ENCODE measurements at regions of chr20 and their contacts with region 1.

Region 1: DNA sequence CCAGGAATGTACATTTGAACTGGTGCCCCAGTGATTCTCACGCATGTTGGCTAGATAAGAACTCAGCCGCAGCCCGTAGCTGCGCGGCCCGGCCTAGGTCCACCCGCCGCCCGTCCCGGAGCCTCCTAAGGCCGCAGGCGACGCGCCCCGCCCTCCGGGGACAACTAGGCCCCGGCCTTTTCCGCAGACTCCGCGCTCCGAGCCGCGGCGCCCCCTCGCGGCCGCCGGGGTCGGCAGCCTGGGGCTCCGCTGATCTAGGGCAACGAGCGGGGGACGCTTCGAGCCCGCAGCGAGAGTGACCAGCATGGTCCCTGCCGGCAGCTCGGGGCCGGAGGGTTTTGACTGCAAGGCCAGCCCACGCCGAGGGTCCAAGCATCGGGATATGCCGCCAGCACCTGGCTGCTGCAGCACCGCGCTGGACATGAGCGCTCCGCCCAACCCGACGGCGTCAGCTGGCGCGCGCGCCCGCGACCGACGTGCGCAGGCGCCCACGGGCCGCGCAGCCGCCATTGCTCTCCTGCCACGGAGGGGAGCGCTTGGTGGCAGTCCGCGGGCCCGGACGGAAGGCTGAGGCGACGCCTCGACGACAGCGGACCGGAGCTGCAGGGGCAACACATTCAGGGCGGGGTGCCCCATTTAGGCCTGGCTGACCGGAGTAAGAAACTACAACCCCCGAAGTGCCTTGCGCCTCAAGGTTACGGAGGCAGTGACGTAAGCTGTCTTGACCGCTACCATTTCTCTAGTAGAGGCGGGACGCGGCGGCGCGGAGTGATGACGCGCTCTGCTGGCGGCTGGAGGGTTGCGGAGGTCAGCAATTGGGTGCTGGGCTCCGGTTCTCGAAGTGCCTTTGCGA is at the start of gene AP5S1:
- DNase-seq: peak; percentile 95
- H3K4me3 Mint-ChIP-seq: peak within 1 kb of the TSS; percentile 85
- H3K27ac Mint-ChIP-seq: peak within 1 kb of the TSS; percentile 89
- H3K4me1 Mint-ChIP-seq: peaks cover 57% of the 10 kb centered on the region
- H3K27me3 Mint-ChIP-seq: no peaks in the 10 kb centered on the region
- total RNA-seq, gene AP5S1: 12.7 to 15.5 TPM

Region 2: DNA sequence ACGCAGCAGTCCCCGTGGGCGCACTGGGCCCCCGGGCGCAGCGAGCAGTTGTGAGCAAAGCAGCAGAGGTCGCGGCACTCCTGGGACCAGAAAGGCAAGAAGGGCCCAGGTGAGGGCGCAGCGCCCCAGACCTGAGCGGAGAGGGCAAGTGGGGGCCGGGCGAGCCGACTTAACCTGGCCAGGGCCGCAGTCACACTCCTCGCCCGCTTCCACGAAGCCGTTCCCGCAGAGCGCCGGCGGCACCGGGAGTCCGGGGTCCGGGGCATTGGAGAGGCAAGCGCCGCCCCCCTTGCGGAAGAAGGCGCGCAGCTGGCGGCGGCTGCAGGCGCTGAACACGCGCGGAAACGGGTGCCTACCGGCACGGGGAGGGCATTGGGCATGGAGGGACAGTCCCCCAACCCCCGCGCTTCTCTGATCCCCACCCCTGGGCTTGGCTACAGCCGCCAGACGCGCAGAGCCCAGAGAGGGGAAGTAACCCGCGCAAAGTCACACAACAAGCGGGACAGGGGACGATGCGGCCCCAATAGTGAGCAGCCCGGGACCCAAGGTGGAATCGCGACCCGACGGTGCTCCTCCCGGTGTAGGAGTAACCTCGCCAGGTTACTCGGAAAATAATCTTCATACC is 147.6 kb before region 1 on chr20:
- CTCF ChIA-PET with region 1: no interaction called
- POLR2A ChIA-PET with region 1: no interaction called
- DNase-seq: no peak
- H3K4me3 Mint-ChIP-seq: no peak overlapping the region
- H3K27ac Mint-ChIP-seq: no peak overlapping the region
- H3K4me1 Mint-ChIP-seq: peaks cover 9% of the 10 kb centered on the region
- H3K27me3 Mint-ChIP-seq: peaks cover 70% of the 10 kb centered on the region

Region 3: DNA sequence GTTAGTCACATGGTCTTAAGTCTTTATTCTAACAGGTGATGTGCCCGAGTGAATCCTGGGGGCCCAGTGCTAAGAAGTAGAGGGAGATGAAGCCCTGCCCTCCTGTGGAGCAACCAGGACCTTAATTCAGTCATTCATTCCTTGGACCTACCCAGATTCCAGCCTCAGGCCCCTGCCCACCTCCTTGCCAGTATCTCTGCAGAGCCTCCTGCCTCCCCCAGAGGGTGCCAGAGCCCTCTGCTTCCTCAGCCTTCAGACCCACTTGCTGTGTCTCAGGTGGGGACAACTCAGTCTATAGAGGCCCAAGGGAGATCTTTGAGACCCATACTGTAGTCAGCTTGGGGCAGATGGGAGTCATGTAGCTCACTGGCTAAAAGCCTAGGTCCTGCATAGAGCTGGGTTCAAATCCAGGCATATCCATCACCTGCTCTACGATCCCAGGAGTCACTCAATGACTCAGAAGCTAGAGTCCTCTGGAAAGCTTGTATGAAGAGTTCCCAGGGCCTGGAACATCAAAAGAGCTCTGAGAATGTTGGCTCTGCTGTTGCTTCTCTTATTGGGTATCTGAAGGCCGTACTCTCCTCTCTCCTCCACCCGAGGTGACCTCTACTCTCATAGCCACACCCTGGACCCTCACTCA is 104.0 kb before region 1 on chr20:
- CTCF ChIA-PET with region 1: no interaction called
- POLR2A ChIA-PET with region 1: no interaction called
- DNase-seq: peak; percentile 36
- H3K4me3 Mint-ChIP-seq: no peak overlapping the region
- H3K27ac Mint-ChIP-seq: no peak overlapping the region
- H3K4me1 Mint-ChIP-seq: peaks cover 29% of the 10 kb centered on the region
- H3K27me3 Mint-ChIP-seq: peaks cover 19% of the 10 kb centered on the region

Region 4: DNA sequence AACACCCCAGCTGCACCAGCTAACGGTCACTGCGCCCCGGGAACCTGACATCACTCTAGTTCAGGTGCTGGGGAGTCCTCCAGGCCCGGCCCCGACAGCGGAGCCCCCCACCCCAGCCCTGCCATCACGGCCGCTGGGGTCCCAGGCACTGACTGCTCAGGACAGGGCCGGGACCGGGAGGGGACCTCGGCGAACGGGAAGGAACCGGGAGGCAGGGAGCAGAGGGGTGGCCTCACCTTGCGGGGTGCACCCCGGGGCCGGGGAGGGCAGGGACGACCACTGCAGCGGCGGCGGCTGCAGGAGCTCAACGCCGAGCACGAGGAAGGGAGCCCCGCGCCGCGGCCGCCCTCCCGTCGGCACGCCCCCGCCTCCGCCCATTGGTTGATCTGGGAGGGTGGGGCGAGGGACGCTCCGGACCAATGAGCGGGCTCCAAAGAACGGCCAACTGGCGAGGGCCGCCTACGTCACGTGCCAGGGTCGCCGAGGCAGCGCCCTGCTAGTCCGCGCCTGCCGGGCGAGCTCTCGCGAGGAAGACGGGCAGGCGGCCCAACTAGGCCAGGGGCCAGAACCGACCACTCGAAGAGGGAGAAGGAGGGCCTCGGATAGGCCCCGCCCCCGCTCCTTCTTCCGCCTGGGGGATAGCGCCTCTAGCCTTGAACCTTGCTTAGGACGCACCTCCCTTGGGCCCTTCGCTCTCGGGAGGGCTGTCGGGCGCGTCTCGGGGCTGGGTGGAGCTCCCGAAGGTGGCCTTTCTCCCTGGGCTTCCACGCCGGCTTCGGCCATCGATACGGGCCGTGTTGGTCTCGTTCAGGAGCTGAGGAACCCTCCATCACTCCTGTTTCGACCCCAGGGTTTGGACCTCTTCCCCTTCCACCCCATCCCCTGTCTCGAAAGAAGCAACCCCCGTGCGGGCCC is 52.6 kb before region 1 on chr20 and contains the start of gene ADISSP:
- CTCF ChIA-PET with region 1: interaction called, 37 read pairs
- POLR2A ChIA-PET with region 1: interaction called, 26 read pairs
- DNase-seq: peak; percentile 99
- H3K4me3 Mint-ChIP-seq: peak within 1 kb of the TSS; percentile 83
- H3K27ac Mint-ChIP-seq: peak within 1 kb of the TSS; percentile 86
- H3K4me1 Mint-ChIP-seq: peaks cover 25% of the 10 kb centered on the region
- H3K27me3 Mint-ChIP-seq: peaks cover 2% of the 10 kb centered on the region
- total RNA-seq, gene ADISSP: 20.7 to 23.4 TPM

Region 5: DNA sequence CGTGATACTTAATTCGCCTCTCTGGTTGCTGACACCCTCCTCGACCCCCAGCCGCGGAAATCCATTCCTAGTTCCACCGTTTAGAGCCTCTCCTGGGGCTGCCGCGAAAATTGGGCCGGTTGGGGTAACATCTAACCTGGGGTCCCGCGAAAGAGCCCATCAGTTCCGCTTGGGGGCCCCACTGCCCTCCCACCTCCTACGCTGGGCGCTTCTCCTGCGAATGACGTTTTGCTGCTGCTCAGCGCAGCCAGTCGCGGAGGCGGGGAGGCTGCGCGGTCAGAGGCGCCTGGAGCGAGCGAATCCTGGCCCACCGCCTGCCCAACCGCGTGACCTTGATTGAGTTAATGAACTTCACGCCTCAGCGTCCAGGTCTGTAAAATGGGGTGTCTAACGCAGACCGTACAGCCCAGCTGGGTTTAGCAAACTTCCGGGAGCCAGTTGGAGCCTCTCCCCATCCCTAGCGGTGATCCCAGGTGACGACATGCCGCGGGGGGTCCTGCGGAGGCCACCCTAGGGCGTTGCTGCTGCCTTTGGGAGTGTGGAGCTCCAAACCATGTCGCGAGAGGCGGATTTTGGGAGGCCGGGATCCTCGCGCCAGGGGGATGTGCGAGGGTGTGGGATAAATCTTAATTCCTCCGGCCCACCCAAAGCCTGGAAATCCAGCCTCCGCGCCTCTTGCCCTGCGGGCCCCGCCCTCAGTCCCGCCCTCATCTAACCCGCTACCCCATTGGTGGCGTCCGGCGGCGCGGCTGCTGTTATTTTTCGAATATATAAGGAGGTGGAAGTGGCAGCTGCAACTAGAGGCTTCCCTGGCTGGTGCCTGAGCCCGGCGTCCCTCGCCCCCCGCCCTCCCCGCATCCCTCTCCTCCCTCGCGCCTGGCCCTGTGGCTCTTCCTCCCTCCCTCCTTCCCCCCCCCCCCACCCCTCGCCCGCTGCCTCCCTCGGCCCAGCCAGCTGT is 24.5 kb before region 1 on chr20 and contains the start of gene CDC25B:
- CTCF ChIA-PET with region 1: interaction called, 33 read pairs
- POLR2A ChIA-PET with region 1: interaction called, 90 read pairs
- DNase-seq: peak; percentile 95
- H3K4me3 Mint-ChIP-seq: peak within 1 kb of the TSS; percentile 91
- H3K27ac Mint-ChIP-seq: peak within 1 kb of the TSS; percentile 96
- H3K4me1 Mint-ChIP-seq: peaks cover 41% of the 10 kb centered on the region
- H3K27me3 Mint-ChIP-seq: no peaks in the 10 kb centered on the region
- total RNA-seq, gene CDC25B: 452 to 454 TPM

Region 6: GRCh38 chr20:3839169-3839727 is 19.0 kb after region 1 on chr20:
- CTCF ChIA-PET with region 1: interaction called, 11 read pairs
- POLR2A ChIA-PET with region 1: interaction called, 5 read pairs
- DNase-seq: no peak
- H3K4me3 Mint-ChIP-seq: no peak overlapping the region
- H3K27ac Mint-ChIP-seq: no peak overlapping the region
- H3K4me1 Mint-ChIP-seq: peaks cover 23% of the 10 kb centered on the region
- H3K27me3 Mint-ChIP-seq: no peaks in the 10 kb centered on the region

Region 7: DNA sequence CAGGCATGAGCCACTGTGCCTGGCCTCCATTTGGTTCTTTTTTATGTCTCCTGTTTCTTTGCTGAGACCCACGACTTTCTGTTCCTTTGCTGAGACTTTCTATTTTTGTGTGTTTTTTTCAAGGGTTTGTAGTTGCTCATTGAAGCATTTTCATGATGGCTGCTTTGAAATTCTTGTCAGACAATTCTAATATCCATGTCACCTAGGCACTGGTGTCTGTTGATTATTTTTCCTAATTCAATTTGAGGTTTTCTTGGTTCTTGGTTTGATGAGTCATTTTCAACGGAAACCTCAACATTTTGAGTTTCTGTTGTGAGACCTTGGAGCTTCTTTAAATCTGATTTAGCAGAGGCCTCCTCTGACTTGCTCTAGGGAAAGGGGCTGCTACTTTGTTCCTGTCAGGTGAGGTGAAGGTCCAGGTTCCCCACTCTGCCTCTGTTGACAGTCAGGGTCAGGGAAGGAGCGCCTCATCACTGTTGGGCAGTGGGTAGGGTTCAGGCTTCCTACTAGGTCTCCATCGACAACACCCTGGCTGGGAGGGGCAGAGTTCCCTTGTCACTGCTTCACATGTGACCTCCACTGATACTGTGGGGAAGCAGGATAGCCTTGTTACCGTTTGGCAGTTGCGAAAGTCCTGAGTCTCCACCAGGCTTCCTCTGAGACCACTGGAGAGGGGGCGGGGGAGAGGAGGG is 262.3 kb after region 1 on chr20:
- CTCF ChIA-PET with region 1: interaction called, 11 read pairs
- POLR2A ChIA-PET with region 1: interaction called, 4 read pairs
- DNase-seq: peak; percentile 75
- H3K4me3 Mint-ChIP-seq: peak overlapping the region; percentile 28
- H3K27ac Mint-ChIP-seq: peak overlapping the region; percentile 88
- H3K4me1 Mint-ChIP-seq: peaks cover 55% of the 10 kb centered on the region
- H3K27me3 Mint-ChIP-seq: no peaks in the 10 kb centered on the region

Measured in activated CD4-positive, alpha-beta memory T cell treated with anti-CD3 and anti-CD28 coated beads, Interleukin-2, amount 10 ng/mL, durations not matched to agents 7 days and 5 days (primary cell).